Prostate gland (tissue), 2 donors: ENCODE measurements at regions of chr6 and their contacts with region 1.

Region 1: GRCh38 chr6:105484238-105485161 is 81.6 kb upstream of the PREP start:
- DNase-seq: no peak
- H3K4me3 ChIP-seq: no peak overlapping the region
- H3K27ac ChIP-seq: no peak overlapping the region
- H3K4me1 ChIP-seq: peaks cover 3% of the 10 kb centered on the region
- H3K27me3 ChIP-seq: no peaks in the 10 kb centered on the region
- CTCF ChIP-seq: peak; percentile 69 to 87 (median 83)
- POLR2A ChIP-seq: no peak

Region 2: DNA sequence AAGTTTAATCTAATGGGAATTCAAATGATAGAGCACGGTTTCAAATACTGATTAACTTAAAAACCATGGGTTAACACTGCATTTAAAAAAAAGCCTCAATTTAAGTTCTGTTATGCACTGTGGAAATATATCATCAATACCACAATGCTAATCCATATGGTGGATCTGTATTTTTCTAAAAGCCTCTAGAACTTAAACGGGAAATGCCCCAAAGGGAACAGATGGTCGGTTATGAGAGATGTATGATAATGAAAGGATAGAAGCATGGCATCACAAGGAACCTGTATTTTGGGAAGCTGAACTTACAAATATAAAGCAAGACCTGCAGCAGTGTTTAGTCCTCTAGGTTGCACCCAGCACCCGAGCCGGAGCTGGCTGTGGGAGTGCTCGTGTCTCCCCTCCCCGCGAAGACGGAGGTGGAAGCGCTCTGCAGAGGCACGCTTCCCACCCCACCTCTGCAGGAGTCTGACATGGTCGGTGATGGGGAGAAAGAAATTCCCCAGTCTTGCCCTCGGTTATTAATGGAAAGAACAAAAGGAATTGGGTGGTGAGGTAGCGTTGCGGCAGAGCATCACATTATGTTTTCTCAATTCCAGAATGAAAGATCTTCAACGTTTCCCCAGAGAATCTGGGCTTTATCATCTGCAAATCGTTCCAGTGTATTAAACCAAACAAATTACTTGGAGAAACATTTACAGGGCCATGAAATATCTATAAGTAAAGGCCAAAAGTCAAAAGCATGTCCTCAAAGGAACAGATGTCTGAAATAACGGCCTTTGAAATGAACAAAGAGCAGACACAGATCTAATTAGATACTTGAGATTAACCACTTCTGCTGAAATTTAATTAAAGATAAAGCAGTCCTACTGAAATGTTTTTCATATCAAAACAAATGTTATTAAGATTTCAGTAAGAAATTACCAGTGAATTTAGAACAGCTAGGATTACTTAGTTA is 201.6 kb before region 1 on chr6:
- intact Hi-C with region 1: no loop called
- DNase-seq: no peak
- H3K4me3 ChIP-seq: no peak overlapping the region
- H3K27ac ChIP-seq: no peak overlapping the region
- H3K4me1 ChIP-seq: no peaks in the 10 kb centered on the region
- H3K27me3 ChIP-seq: no peaks in the 10 kb centered on the region
- CTCF ChIP-seq: no peak
- POLR2A ChIP-seq: no peak

Region 3: DNA sequence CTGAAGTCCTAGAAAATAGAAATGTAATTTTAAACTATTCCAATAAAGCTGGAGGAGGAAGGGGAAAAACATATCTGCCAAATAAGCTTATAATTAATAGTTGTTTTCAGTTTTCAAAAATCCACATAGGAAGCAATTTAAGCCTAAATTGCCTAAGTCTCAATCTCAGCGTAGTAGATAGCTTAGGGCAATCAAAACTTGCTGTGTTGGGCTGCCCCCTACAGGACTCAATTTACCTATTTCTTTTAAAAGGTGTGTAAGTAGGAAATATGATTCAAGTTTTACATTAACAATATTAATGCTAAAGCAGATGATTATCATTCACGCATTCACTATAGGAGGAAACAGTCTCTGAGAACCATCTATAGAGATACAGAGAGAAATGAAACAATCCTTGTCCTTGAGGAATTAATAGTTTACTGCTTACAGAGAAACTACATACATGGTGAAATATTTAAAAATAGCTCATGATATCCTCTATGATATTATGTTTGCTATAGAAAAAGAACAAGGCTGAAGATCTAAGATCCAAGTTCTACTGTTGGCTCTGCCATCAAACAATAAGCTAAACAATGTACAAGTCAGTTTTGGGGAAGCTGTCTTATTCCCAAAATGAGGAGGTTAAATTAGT is 738.9 kb after region 1 on chr6:
- intact Hi-C with region 1: loop called (anchors 5 kb)
- DNase-seq: peak; percentile 21
- H3K4me3 ChIP-seq: no peak overlapping the region
- H3K27ac ChIP-seq: no peak overlapping the region
- H3K4me1 ChIP-seq: no peaks in the 10 kb centered on the region
- H3K27me3 ChIP-seq: no peaks in the 10 kb centered on the region
- CTCF ChIP-seq: peak; percentile 15 to 71 (median 40)
- POLR2A ChIP-seq: no peak

Region 4: DNA sequence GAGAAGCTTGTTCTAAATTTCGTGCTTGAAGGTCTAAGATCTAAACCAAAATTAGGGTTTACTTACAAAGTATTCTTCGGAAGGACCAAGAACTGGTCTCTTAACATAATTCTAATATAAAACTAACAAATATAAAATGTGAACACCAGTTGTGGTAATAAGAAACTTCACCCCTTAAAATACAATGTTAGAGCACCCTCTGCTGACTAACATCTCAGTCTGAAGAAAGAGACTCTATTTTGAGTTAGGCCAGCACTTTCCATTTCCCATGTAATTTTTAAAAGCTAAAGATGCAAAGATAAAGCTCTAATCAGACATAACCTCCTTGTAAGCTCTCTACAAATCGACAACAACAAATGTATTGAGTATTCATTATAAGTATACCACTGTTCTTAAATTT is 816.4 kb after region 1 on chr6:
- intact Hi-C with region 1: loop called (anchors 5 kb)
- DNase-seq: no peak
- H3K4me3 ChIP-seq: no peak overlapping the region
- H3K27ac ChIP-seq: no peak overlapping the region
- H3K4me1 ChIP-seq: no peaks in the 10 kb centered on the region
- H3K27me3 ChIP-seq: no peaks in the 10 kb centered on the region
- CTCF ChIP-seq: peak in 3 of 4 experiments; percentile 55 to 66 (median 62)
- POLR2A ChIP-seq: no peak